ENCODE measurements at regions of chr1 and their contacts with region 1.

Region 1: DNA sequence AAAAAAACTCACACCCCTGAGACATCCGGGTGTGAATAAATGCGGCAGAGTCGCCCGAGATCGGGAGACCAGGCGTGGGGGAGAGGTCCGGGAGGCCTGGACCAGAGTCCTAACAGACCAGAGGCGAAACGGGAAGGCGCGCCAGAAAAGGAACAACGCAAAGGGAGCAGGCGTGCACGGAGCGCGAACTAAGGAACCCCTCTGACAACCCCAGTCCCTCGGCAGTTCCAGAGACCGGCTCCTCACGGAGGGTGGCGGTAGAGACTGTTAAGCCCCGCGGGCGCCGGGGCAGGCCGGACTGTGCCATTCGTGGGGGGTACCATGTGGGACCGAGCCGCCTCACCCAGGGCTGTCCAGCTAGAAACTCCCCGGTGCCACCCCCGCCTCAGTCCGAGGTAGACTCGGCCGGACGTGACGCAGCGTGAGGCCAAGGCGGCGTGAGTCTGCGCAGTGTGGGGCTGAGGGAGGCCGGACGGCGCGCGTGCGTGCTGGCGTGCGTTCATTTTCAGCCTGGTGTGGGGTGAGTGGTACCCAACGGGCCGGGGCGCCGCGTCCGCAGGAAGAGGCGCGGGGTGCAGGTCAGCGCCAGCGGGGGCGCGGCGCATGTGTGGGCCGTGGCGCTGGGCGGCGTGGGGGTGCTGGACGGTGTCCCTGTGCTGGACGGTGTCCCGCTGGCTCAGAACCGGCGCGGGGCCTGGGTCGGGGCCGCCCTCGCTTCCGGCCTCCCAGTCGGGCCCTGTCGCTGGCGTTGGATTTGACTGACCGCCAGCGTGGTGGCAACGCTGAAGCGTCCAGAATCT is at the start of gene PARK7:
- DNase-seq: peak; percentile 100
- H3K4me3 Mint-ChIP-seq: peak within 1 kb of the TSS; percentile 97
- H3K27ac Mint-ChIP-seq: peak within 1 kb of the TSS; percentile 98
- H3K4me1 Mint-ChIP-seq: peaks cover 61% of the 10 kb centered on the region
- H3K27me3 Mint-ChIP-seq: peaks cover 2% of the 10 kb centered on the region
- total RNA-seq, gene PARK7: 425 and 429 TPM in 2 replicates

Region 2: DNA sequence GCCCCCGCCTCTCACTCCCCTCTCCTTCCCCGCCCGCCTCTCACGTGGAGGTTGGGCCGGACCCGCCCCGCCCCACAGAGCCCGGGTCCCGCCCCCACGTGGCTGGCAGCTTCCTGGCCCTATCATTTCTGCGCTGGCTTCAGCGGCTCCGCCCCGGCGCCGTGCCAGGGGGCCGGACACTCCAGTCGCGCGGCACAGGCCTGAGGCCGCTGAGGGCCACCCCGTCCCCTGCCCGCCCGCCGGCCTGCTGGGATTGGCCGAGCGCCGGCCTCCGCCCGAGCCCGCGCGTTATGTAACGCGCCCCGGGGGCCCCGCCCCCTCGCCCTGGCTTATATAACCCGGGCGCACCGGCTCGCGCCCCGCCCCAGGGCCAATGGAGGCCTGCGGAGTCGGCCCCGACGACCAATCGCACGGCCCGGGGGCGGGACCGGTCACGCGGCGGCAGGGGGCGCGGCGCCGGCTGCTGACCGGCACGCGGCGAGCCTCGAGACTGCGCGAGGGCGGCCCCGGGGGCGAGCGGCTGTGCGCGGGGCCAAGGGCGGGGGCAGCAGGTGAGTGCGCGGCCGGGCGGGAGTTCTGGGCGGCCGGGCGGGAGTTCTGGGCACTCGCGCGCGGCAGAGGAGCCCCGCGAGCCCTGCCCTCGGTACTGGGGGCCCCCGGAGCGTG is 177.5 kb before region 1 on chr1 and contains the start of gene PER3:
- intact Hi-C with region 1: loop called (anchors 1 kb)
- DNase-seq: peak; percentile 87
- H3K4me3 Mint-ChIP-seq: peak within 1 kb of the TSS; percentile 74
- H3K27ac Mint-ChIP-seq: no peak within 1 kb of the TSS
- H3K4me1 Mint-ChIP-seq: peaks cover 21% of the 10 kb centered on the region
- H3K27me3 Mint-ChIP-seq: peaks cover 7% of the 10 kb centered on the region
- total RNA-seq, gene PER3: 4.0 and 4.4 TPM in 2 replicates

Region 3: GRCh38 chr1:7902478-7903085 is 58.8 kb before region 1 on chr1:
- intact Hi-C with region 1: loop called (anchors 2 kb)
- DNase-seq: peak; percentile 39
- H3K4me3 Mint-ChIP-seq: peak overlapping the region; percentile 48
- H3K27ac Mint-ChIP-seq: no peak overlapping the region
- H3K4me1 Mint-ChIP-seq: peaks cover 7% of the 10 kb centered on the region
- H3K27me3 Mint-ChIP-seq: peaks cover 7% of the 10 kb centered on the region

Region 4: DNA sequence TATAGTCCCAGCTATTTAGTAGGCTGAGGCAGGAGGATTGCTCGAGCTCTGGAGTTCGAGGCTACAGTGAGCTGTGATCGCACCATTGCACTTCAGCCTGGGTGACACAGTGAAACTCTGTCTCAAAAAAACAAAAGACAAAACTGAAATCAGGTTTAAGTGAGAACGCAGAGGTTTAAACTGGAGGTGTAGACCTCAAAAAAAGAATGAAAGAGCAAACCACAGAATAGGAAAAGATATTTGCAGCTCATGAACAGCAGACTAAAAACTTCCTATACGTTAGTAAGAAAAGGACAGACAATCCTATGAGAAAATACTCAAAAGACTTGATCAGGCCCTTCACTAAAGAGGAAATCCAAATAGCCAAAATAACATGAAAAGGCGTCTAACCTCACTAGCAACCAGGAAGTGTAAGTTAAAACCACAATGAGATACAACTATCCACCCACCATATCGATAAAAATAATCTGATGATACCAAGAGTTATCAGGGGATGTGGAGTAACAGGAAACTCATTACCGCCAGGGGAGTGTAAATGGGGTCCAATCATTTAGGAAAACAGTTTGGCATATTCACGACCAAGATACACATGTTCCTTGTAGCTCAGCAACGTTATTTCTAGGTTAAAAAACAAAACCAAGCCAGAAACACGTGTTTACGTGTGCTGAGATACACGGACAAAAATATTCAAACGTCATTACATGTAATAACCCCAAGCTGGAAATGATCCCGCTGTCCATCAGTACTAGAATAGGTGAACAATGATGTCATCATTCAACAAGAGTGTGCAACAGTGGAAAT is 30.6 kb before region 1 on chr1:
- intact Hi-C with region 1: loop called (anchors 1 kb)
- DNase-seq: no peak
- H3K4me3 Mint-ChIP-seq: peak overlapping the region; percentile 56
- H3K27ac Mint-ChIP-seq: peak overlapping the region; percentile 89
- H3K4me1 Mint-ChIP-seq: peaks cover 38% of the 10 kb centered on the region
- H3K27me3 Mint-ChIP-seq: peaks cover 6% of the 10 kb centered on the region

Region 5: DNA sequence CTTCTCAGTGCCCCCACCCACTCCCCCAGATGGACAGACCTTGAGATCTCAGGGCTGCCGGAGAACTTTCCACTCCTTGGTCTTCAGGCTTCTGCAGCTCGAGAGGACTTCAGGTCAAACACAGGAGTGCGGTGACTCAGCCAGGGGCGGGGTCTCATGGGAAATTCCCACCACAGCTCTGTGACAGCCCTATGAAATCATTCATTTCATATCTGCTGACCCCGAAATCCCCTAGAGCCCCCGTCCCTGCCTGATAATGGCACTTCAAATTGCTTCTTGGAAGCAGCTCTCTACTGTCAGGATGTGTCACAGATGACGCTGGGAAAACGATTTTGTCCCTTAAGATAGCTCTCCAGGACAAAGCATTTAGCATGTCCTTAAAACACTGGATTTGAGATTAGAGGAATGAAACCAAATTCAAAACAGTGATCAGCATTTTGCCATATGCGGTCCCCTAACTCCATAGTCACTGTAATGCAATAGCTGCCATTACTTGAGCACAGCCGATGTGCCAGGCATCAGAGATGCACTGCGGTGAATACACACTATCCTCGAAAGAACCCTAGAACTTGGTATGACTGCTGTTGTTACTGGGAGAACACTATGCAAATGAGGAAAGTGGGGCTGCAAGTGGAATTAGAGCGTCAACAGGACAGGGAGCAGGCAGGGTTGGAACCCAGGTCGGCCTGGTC is 20.5 kb before region 1 on chr1 and contains the start of gene TNFRSF9:
- intact Hi-C with region 1: loop called (anchors 1 kb)
- DNase-seq: peak; percentile 58
- H3K4me3 Mint-ChIP-seq: peak within 1 kb of the TSS; percentile 88
- H3K27ac Mint-ChIP-seq: peak within 1 kb of the TSS; percentile 81
- H3K4me1 Mint-ChIP-seq: peaks cover 69% of the 10 kb centered on the region
- H3K27me3 Mint-ChIP-seq: peaks cover 13% of the 10 kb centered on the region
- total RNA-seq, gene TNFRSF9: 57.0 and 60.5 TPM in 2 replicates

Region 6: DNA sequence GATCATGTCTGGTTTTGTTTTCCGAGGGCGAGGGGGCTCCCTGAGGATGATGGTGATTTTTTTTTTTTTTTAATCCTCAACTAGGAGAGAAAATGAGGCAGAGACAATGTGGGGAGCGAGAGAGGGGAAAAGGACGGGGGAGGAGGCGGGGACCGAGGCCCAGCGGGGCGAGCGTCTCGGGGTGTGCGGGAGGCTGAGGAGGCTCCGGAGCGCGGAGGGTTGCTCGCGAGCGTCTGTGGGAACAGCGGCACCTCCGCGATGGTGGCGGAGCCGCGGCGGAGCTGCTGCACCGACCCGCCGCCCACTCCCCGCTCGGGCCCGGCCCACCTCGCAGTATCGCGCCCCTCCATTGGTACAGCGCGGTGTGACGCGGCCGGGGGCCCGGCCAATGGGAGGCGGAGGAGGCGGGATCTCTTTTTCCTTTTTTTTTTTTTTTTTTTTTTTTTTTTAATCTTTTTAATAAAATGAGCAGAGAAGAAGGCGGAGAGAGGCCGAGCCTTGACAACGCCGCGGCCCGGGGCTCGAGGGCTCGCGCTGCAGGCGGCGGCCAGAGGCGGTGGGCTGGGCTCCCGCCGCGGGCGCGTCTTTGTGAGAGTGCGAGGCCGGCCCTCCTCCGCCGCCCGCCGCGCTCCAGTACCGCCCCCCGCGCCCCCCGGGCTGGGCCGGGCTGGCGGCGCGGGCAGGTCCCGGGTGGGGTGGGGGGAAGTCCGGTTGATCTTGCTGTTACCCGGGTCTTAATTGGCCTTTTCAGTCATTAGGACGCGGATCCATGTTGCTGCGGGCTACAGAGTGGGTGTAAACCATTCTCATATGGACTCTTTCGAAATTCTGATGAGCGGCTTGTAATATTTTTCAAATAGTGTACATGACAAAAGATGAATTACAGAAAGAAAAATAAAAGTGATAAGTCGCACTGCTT is 856.2 kb after region 1 on chr1 and contains the start of gene RERE:
- intact Hi-C with region 1: loop called (anchors 5 kb)
- DNase-seq: peak; percentile 96
- H3K4me3 Mint-ChIP-seq: peak within 1 kb of the TSS; percentile 86
- H3K27ac Mint-ChIP-seq: peak within 1 kb of the TSS; percentile 93
- H3K4me1 Mint-ChIP-seq: peaks cover 44% of the 10 kb centered on the region
- H3K27me3 Mint-ChIP-seq: peaks cover 12% of the 10 kb centered on the region
- total RNA-seq, gene RERE: 82.0 and 90.9 TPM in 2 replicates

Measured in activated T-helper 1 cell treated with anti-CD3 and anti-CD28 coated beads, Interleukin-12 subunit alpha, Interleukin-12 subunit beta, Interleukin-2, Interleukin-4 antibody, amounts not matched to agents 30 ng/mL and 10 ng/mL and 1 ng/mL, durations not matched to agents 14 hours and 24 hours and 36 hours (primary cell).